Left cardiac atrium (tissue), 4 donors: ENCODE measurements at regions of chr16 and their contacts with region 1.

Region 1: DNA sequence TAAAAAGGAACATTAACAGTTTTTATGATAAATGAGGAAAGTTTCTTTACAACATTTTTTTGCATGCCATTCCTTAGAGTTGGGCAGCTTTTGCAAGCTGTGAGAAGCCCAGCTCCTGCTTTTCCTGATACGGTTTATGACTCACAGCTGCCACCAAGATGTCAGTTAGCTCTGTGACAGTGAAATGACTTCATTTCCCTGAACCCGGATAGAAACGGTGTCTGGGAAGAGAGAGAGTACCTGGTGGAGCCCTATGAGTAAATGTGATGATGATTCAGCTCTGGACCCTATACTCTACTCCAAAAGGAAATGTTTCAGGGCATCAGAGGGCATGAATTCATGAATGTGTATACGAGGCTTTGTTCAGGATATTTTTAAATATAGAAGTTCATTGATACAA is 366.3 kb upstream of the HSBP1 start:
- DNase-seq: no peak
- ATAC-seq: peak in 1 of 2 donors; percentile 56

Region 2: DNA sequence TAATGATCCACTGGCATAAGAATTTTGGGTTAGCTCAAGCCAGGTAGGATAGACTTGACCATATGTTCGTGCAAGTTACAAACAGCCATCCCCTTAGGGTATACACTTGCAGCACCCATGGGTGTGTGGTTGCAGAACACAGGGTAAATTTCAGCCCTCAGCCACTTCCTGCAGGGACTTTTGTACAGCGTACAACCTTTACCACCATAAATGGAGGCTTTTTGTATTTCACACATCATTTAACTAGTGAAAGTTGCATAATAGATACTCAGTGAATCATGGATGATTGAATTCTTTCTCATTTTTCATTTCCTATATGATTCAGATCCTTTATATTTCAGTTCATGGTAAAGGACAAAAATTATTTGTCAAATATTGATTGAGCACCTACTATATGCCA is 340.8 kb before region 1 on chr16:
- intact Hi-C with region 1: no loop called
- DNase-seq: no peak
- ATAC-seq: no peak

Region 3: GRCh38 chr16:83113317-83113716 is 328.2 kb before region 1 on chr16:
- intact Hi-C with region 1: loop called in 1 of 2 experiments (anchors 5 kb)
- DNase-seq: no peak
- ATAC-seq: peak; percentile 57 to 65

Region 4: GRCh38 chr16:83374979-83375378 is 66.5 kb before region 1 on chr16:
- intact Hi-C with region 1: no loop called
- DNase-seq: no peak
- ATAC-seq: no peak